Naive thymus-derived CD4-positive, alpha-beta T cell (primary cell): ENCODE measurements at regions of chr1 and their contacts with region 1.

Region 1: GRCh38 chr1:109041621-109042468 is at the start of gene WDR47:
- DNase-seq: peak; percentile 95 to 97 (median 96)
- ATAC-seq: peak; percentile 99
- H3K4me3 ChIP-seq: peak within 1 kb of the TSS; percentile 97
- H3K4me3 Mint-ChIP-seq: peak within 1 kb of the TSS; percentile 86 to 97 (median 94)
- H3K27ac ChIP-seq: peak within 1 kb of the TSS; percentile 90
- H3K27ac Mint-ChIP-seq: peak within 1 kb of the TSS; percentile 78 to 97 (median 91)
- H3K4me1 ChIP-seq: peaks cover 0 to 7% of the 10 kb centered on the region in 2 donors
- H3K4me1 Mint-ChIP-seq: peaks cover 7 to 25% (median 16%) of the 10 kb centered on the region in 7 donors
- H3K27me3 ChIP-seq: no peaks in the 10 kb centered on the region
- H3K27me3 Mint-ChIP-seq: peaks cover 0 to 7% (median 0%) of the 10 kb centered on the region in 5 donors
- total RNA-seq, gene WDR47: 9.8 to 15.4 (median 14.4) TPM

Region 2: GRCh38 chr1:108877348-108878159 is 164.3 kb before region 1 on chr1:
- CTCF ChIA-PET with region 1: no interaction called
- POLR2A ChIA-PET with region 1: no interaction called
- intact Hi-C with region 1: loop called in 1 of 2 experiments (anchors 1 kb)
- DNase-seq: peak in 1 of 9 donors; percentile 0
- ATAC-seq: no peak
- H3K4me3 ChIP-seq: peak overlapping the region; percentile 68
- H3K4me3 Mint-ChIP-seq: peak overlapping the region; percentile 88 to 96 (median 92)
- H3K27ac ChIP-seq: peak overlapping the region; percentile 29
- H3K27ac Mint-ChIP-seq: peak overlapping the region in 7 of 9 donors; percentile 2 to 87 (median 58)
- H3K4me1 ChIP-seq: peaks cover 0 to 4% of the 10 kb centered on the region in 2 donors
- H3K4me1 Mint-ChIP-seq: peaks cover 0 to 27% (median 12%) of the 10 kb centered on the region in 7 donors
- H3K27me3 ChIP-seq: no peaks in the 10 kb centered on the region
- H3K27me3 Mint-ChIP-seq: peaks cover 3 to 17% (median 6%) of the 10 kb centered on the region in 5 donors

Region 3: DNA sequence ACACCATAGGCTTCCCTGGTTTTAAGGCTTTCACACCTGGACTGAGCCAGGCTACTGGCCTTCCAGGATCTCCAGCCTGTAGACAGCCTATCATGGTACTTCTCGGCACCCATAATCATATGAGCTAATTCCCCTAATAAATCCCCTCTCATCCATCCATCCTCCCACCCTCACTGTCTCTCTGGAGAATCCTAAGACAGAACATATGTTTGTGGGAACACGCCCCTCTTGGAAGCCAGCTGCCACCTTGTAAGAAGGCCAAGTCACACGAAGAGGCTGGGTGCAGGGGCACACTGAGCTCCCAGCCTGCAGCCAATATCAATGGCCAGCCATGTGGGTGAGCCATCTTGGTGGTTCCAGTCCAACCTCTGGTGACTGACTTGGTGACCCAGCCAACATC is 86.0 kb before region 1 on chr1:
- CTCF ChIA-PET with region 1: no interaction called
- POLR2A ChIA-PET with region 1: interaction called, 10 read pairs
- intact Hi-C with region 1: loop called in 1 of 2 experiments (anchors 1 kb)
- DNase-seq: no peak
- ATAC-seq: no peak
- H3K4me3 ChIP-seq: no peak overlapping the region
- H3K4me3 Mint-ChIP-seq: peak overlapping the region in 7 of 10 donors; percentile 3 to 75 (median 51)
- H3K27ac ChIP-seq: no peak overlapping the region
- H3K27ac Mint-ChIP-seq: peak overlapping the region in 8 of 9 donors; percentile 22 to 94 (median 87)
- H3K4me1 ChIP-seq: peaks cover 18 to 21% of the 10 kb centered on the region in 2 donors
- H3K4me1 Mint-ChIP-seq: peaks cover 39 to 66% (median 51%) of the 10 kb centered on the region in 7 donors
- H3K27me3 ChIP-seq: no peaks in the 10 kb centered on the region
- H3K27me3 Mint-ChIP-seq: peaks cover 0 to 15% (median 0%) of the 10 kb centered on the region in 5 donors

Region 4: DNA sequence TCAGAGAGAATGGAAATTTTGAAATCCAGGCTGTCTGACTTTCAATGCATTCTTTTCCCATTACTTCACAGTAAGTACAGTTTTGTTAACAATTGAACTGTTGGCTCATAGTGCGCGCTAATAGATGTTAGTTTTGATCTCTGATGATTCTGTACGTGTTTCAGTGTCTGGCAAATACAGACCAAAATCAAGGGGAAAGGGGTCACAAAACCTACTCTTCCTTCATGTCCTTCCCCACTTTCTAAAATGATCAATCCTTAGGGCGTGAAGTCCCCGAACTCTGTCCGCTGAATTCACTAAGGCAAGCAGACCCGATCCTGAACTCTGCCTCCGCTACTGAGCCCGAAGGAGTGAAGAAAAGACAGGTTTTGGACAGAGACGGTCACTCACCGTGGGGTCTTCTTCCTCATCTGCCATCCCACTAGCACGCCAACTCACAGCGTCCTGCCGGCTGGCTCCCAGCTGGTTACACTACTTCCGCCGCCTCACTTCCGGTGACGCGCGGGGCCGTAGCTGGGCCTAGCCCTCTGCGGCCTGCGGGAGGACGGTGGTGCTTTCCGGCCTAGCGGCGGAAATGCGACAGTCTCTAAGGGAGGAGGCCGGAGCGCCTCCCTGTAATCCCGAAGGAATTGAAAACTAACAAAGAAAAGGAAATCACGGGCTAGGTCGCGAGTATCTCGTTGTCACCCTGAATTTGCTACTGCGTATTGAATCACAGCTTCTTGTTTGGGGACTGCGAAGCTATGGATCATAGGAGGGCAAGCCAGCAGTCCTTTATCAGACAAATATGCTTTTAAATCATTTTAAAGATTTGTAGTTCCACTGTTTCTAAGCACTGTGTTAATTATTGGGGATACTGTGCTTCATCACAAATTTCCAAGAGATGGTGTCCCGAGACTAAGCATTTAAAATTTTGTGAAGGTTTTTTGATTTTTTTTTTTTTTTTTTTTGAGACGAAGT is 34.0 kb after region 1 on chr1 and contains the start of gene TAF13:
- CTCF ChIA-PET with region 1: no interaction called
- POLR2A ChIA-PET with region 1: interaction called, 16 read pairs
- intact Hi-C with region 1: loop called (anchors 1 kb)
- DNase-seq: peak; percentile 75 to 89 (median 84)
- ATAC-seq: peak; percentile 100
- H3K4me3 ChIP-seq: peak within 1 kb of the TSS; percentile 80
- H3K4me3 Mint-ChIP-seq: peak within 1 kb of the TSS; percentile 89 to 99 (median 98)
- H3K27ac ChIP-seq: peak within 1 kb of the TSS; percentile 92
- H3K27ac Mint-ChIP-seq: peak within 1 kb of the TSS; percentile 95 to 100 (median 99)
- H3K4me1 ChIP-seq: peaks cover 5 to 8% of the 10 kb centered on the region in 2 donors
- H3K4me1 Mint-ChIP-seq: peaks cover 13 to 28% (median 20%) of the 10 kb centered on the region in 7 donors
- H3K27me3 ChIP-seq: no peaks in the 10 kb centered on the region
- H3K27me3 Mint-ChIP-seq: no peaks in the 10 kb centered on the region
- total RNA-seq, gene TAF13: 11.0 to 23.6 (median 17.6) TPM

Region 5: GRCh38 chr1:109090196-109091077 is 48.6 kb after region 1 on chr1 and contains the start of gene TMEM167B:
- CTCF ChIA-PET with region 1: interaction called, 4 read pairs
- POLR2A ChIA-PET with region 1: interaction called, 19 read pairs
- intact Hi-C with region 1: loop called (anchors 1 kb)
- DNase-seq: peak; percentile 71 to 92 (median 87)
- ATAC-seq: peak; percentile 98
- H3K4me3 ChIP-seq: peak within 1 kb of the TSS; percentile 84
- H3K4me3 Mint-ChIP-seq: peak within 1 kb of the TSS; percentile 88 to 98 (median 96)
- H3K27ac ChIP-seq: peak within 1 kb of the TSS; percentile 97
- H3K27ac Mint-ChIP-seq: peak within 1 kb of the TSS; percentile 90 to 99 (median 98)
- H3K4me1 ChIP-seq: peaks cover 14 to 18% of the 10 kb centered on the region in 2 donors
- H3K4me1 Mint-ChIP-seq: peaks cover 15 to 43% (median 36%) of the 10 kb centered on the region in 7 donors
- H3K27me3 ChIP-seq: no peaks in the 10 kb centered on the region
- H3K27me3 Mint-ChIP-seq: no peaks in the 10 kb centered on the region
- total RNA-seq, gene TMEM167B: 33.2 to 65.6 (median 41.2) TPM

Region 6: DNA sequence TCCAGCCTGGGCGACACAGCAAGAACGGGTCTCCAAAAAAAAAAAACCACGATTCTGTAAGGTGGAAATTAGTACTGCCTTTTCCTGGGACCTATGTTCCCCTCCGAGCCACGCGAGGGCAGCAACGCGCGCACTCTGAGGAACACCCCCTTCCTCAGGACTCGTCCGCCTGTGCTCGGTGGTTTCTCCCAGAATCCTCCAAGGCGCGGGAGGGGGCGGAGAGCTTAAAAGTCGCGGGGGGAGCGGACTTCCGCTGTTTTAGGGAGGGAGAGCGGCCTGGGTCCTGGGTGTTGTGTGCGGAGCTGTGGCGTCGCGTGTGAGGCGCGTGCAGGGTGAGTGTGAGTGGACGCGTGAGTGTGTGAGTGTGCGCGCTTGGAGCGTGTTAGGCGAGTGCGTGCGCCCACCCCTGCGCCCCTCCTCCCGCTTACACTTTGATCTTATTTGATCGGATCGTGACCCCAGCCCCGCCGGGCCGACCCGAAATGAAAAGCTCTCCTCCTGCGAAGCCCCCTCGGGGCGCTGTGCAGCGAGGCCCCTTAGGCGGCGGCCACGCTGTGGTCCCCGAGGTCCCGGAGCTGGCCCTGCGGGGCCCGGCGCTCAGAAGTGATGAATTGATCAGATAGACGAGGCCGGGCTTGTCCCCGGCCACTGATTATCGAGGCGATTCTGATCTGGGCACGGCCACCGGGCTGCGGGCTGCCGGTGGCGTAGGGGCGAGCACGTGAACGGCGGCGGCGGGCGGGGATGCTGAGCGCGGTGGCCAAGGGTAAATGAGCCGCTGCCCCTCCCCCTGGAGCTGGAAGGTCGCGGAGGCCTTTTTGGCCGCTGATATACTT is 58.3 kb after region 1 on chr1:
- CTCF ChIA-PET with region 1: interaction called, 4 read pairs
- POLR2A ChIA-PET with region 1: interaction called, 27 read pairs
- intact Hi-C with region 1: loop called (anchors 1 kb)
- DNase-seq: peak; percentile 90 to 98 (median 97)
- ATAC-seq: peak; percentile 98
- H3K4me3 ChIP-seq: peak overlapping the region; percentile 80
- H3K4me3 Mint-ChIP-seq: peak overlapping the region; percentile 93 to 99 (median 98)
- H3K27ac ChIP-seq: peak overlapping the region; percentile 88
- H3K27ac Mint-ChIP-seq: peak overlapping the region; percentile 92 to 99 (median 96)
- H3K4me1 ChIP-seq: peaks cover 0 to 5% of the 10 kb centered on the region in 2 donors
- H3K4me1 Mint-ChIP-seq: peaks cover 5 to 22% (median 13%) of the 10 kb centered on the region in 7 donors
- H3K27me3 ChIP-seq: no peaks in the 10 kb centered on the region
- H3K27me3 Mint-ChIP-seq: peaks cover 0 to 2% (median 0%) of the 10 kb centered on the region in 5 donors

Region 7: GRCh38 chr1:109263597-109264398 is 222.0 kb after region 1 on chr1:
- CTCF ChIA-PET with region 1: no interaction called
- POLR2A ChIA-PET with region 1: no interaction called
- intact Hi-C with region 1: no loop called
- DNase-seq: peak; percentile 57 to 86 (median 68)
- ATAC-seq: peak; percentile 92
- H3K4me3 ChIP-seq: no peak overlapping the region
- H3K4me3 Mint-ChIP-seq: peak overlapping the region in 1 of 10 donors; percentile 60
- H3K27ac ChIP-seq: no peak overlapping the region
- H3K27ac Mint-ChIP-seq: peak overlapping the region in 1 of 9 donors; percentile 36
- H3K4me1 ChIP-seq: no peaks in the 10 kb centered on the region
- H3K4me1 Mint-ChIP-seq: peaks cover 0 to 9% (median 0%) of the 10 kb centered on the region in 7 donors
- H3K27me3 ChIP-seq: no peaks in the 10 kb centered on the region
- H3K27me3 Mint-ChIP-seq: no peaks in the 10 kb centered on the region